PC-9 (cell line): ENCODE measurements at regions of chr4 and their contacts with region 1.

Region 1: DNA sequence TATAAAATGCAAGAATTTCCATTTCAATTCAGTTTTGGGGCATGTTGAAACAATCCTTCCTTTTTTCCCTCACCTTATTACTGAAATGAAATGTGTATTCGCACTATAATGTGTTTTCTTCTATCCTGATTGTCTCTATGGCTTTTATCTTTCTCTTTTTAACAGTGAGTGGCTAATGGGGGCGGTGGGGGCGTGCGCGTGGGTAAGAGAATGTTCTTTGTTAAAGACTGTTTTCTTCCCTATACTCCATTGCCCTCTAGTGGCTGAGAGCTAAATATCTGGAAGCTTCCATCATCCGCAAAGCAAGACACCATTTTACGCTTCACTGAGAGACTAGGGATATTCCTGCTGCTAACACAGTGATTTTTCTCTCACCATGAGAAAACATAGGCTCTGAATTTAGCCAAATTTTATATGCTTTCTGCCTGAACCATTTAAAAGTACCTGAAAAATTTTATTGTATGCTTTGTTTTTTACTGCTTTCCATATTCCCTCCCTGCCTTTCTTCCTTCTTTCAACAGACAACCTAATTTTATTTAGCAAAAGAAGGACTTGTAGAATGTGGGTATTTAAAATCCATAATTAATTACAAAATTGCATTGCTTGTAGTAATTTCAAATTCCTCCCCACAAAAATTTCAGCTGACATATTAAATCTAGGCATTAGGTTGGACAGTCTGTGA is 194.0 kb downstream of the GASK1B start:
- DNase-seq: peak in 1 of 2 experiments; percentile 22
- H3K4me3 ChIP-seq: no peak overlapping the region
- H3K27ac ChIP-seq: no peak overlapping the region
- H3K4me1 ChIP-seq: no peaks in the 10 kb centered on the region
- H3K27me3 ChIP-seq: no peaks in the 10 kb centered on the region
- CTCF ChIP-seq: peak; percentile 90

Region 2: GRCh38 chr4:156109949-156110900 is 1868.6 kb before region 1 on chr4:
- CTCF ChIA-PET with region 1: no interaction called
- POLR2A ChIA-PET with region 1: no interaction called
- intact Hi-C with region 1: loop called (anchors 10 kb)
- DNase-seq: no peak
- H3K4me3 ChIP-seq: no peak overlapping the region
- H3K27ac ChIP-seq: no peak overlapping the region
- H3K4me1 ChIP-seq: peaks cover 6% of the 10 kb centered on the region; the same call in 1 of the 2 replicates
- H3K27me3 ChIP-seq: no peaks in the 10 kb centered on the region
- CTCF ChIP-seq: no peak

Region 3: DNA sequence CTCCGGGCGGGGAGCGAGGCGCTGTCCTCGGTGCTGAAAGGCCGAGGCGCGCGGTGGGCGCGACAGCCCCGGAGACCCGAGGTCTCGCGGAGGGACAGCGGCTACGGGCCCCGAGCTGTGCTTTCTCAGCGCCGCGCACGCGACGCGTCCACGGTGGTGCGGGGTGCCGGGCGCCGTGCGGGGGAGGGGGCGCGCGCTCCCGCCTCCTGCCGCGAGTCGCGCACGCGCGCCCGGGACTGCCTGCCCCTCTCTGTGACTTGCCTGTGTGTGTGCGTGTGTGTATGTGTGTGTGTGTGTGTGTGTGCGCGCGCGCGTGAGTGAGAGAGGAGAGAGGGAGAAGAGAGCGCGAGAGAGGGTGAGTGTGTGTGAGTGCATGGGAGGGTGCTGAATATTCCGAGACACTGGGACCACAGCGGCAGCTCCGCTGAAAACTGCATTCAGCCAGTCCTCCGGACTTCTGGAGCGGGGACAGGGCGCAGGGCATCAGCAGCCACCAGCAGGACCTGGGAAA is 758.4 kb before region 1 on chr4 and contains the start of gene GRIA2:
- CTCF ChIA-PET with region 1: no interaction called
- POLR2A ChIA-PET with region 1: no interaction called
- intact Hi-C with region 1: loop called (anchors 2 kb)
- DNase-seq: peak in 1 of 2 experiments; percentile 72
- H3K4me3 ChIP-seq: no peak within 1 kb of the TSS; the same call in 1 of the 2 replicates
- H3K27ac ChIP-seq: no peak within 1 kb of the TSS
- H3K4me1 ChIP-seq: no peaks in the 10 kb centered on the region
- H3K27me3 ChIP-seq: no peaks in the 10 kb centered on the region
- CTCF ChIP-seq: no peak
- total RNA-seq, gene GRIA2: not detected in 2 replicates